Endothelial cell of umbilical vein (primary cell): ENCODE measurements at regions of chr11 and their contacts with region 1.

Region 1: GRCh38 chr11:942823-943222 is 17.2 kb downstream of the AP2A2 start:
- DNase-seq: no peak
- H3K4me3 ChIP-seq: no peak overlapping the region
- H3K27ac ChIP-seq: no peak overlapping the region
- H3K4me1 ChIP-seq: peaks cover 16% of the 10 kb centered on the region
- H3K27me3 ChIP-seq: no peaks in the 10 kb centered on the region
- CTCF ChIP-seq: no peak
- POLR2A ChIP-seq: no peak

Region 2: DNA sequence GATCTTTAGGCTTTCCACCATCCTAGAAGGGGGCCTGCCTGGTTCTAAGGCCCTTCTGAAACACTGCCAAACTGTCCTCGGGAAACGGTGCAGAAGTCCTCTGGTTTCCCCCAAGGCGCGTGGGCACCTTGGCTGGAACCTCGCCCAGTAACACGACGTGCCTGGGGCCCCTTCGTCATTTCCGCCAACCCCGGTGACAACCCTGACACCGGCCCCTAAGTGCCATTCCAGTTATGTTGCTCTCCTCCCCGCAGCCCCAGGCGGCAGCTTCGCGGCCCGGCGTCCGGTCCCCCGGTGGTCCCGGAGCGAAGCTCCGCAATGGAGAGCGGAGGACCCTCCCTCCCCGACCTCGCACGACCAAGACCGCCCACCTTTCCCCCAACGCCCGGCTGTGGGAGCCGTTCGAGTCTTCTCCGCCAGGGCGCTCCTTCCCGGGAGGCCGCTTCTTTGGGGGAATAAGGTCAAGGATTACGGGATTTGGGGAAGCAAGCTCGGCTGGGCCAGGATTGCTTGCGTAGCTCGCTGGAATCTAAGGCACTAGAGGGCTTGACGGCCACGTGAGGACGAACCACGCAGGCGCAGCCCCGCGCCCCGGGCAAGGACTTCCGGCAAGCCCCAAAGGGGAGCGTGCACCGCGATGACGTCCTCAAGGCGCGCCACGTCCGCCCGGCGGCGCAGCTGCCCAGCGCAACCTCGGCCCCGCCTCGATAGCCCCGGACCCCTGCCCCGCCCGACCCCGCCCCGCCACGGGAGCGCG is 436.4 kb before region 1 on chr11:
- CTCF ChIA-PET with region 1: no interaction called
- POLR2A ChIA-PET with region 1: no interaction called
- dilution Hi-C with region 1: no loop called
- intact Hi-C with region 1: no loop called
- DNase-seq: peak; percentile 98
- H3K4me3 ChIP-seq: peak overlapping the region; percentile 69 to 81 (median 79)
- H3K27ac ChIP-seq: peak overlapping the region; percentile 99
- H3K4me1 ChIP-seq: peaks cover 24% of the 10 kb centered on the region
- H3K27me3 ChIP-seq: no peaks in the 10 kb centered on the region
- CTCF ChIP-seq: no peak
- POLR2A ChIP-seq: peak; percentile 53

Region 3: DNA sequence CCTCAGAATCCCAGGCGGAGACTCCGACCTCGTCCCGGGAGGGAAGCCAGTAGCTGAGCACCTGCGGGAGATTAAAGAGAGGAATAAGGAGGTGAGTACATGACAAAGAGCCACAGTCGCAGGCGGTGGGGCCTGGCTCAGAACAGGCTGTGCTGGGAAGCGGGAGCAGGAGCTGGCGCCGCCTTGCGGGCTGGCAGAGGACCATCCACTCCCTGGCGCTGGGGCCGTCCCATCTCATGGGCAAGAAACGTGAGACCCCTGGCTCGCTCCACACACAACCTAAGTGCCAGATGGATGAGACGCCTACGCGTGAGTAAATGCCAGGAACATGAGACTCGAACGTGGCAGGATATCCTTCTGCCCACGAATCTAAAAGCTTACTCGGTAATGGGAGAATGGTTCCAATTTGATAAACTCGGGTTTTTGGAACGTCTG is 159.2 kb before region 1 on chr11:
- CTCF ChIA-PET with region 1: no interaction called
- POLR2A ChIA-PET with region 1: no interaction called
- dilution Hi-C with region 1: no loop called
- intact Hi-C with region 1: no loop called
- DNase-seq: peak; percentile 80
- H3K4me3 ChIP-seq: no peak overlapping the region
- H3K27ac ChIP-seq: no peak overlapping the region
- H3K4me1 ChIP-seq: no peaks in the 10 kb centered on the region
- H3K27me3 ChIP-seq: no peaks in the 10 kb centered on the region
- CTCF ChIP-seq: peak; percentile 82 to 93
- POLR2A ChIP-seq: no peak

Region 4: GRCh38 chr11:931385-931784 is 11.4 kb before region 1 on chr11:
- CTCF ChIA-PET with region 1: interaction called, 5 read pairs
- POLR2A ChIA-PET with region 1: no interaction called
- dilution Hi-C with region 1: no loop called
- intact Hi-C with region 1: loop called (anchors 1 kb)
- DNase-seq: peak; percentile 96
- H3K4me3 ChIP-seq: no peak overlapping the region
- H3K27ac ChIP-seq: peak overlapping the region; percentile 39
- H3K4me1 ChIP-seq: peaks cover 51% of the 10 kb centered on the region
- H3K27me3 ChIP-seq: no peaks in the 10 kb centered on the region
- CTCF ChIP-seq: no peak
- POLR2A ChIP-seq: peak; percentile 58

Region 5: DNA sequence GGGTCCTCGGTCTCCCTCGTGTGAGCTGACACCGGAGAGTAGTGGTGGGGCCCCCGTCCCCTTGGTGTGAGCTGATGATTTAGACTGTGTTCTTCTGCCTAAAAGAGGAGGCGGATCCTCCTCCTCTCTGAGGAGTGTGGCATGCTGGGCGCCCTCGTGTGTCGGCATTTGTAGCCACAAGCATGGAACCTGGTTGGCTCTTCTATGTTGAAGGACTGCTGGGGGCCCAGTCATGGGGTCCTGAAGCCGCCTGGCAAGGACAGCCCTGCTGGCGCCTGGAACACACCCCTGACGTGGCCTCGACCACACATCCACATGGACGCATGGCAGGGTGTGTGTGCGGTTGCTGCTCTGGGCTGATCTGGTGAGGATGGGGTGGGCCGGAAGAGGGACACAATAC is 33.0 kb after region 1 on chr11:
- CTCF ChIA-PET with region 1: no interaction called
- POLR2A ChIA-PET with region 1: no interaction called
- dilution Hi-C with region 1: no loop called
- intact Hi-C with region 1: no loop called
- DNase-seq: peak; percentile 44
- H3K4me3 ChIP-seq: no peak overlapping the region
- H3K27ac ChIP-seq: no peak overlapping the region
- H3K4me1 ChIP-seq: no peaks in the 10 kb centered on the region
- H3K27me3 ChIP-seq: no peaks in the 10 kb centered on the region
- CTCF ChIP-seq: peak in 1 of 2 donors; percentile 42
- POLR2A ChIP-seq: no peak

Region 6: GRCh38 chr11:1012740-1013630 is 70.2 kb after region 1 on chr11:
- CTCF ChIA-PET with region 1: no interaction called
- POLR2A ChIA-PET with region 1: interaction called, 11 read pairs
- dilution Hi-C with region 1: no loop called
- intact Hi-C with region 1: no loop called
- DNase-seq: no peak
- H3K4me3 ChIP-seq: no peak overlapping the region
- H3K27ac ChIP-seq: no peak overlapping the region
- H3K4me1 ChIP-seq: no peaks in the 10 kb centered on the region
- H3K27me3 ChIP-seq: no peaks in the 10 kb centered on the region
- CTCF ChIP-seq: no peak
- POLR2A ChIP-seq: no peak